Transverse colon (tissue), 4 donors: ENCODE measurements at regions of chr1 and their contacts with region 1.

Region 1: GRCh38 chr1:67149179-67149770 is 14.5 kb upstream of the C1orf141 start:
- DNase-seq: peak; percentile 78
- H3K4me3 ChIP-seq: no peak overlapping the region
- H3K27ac ChIP-seq: no peak overlapping the region
- H3K4me1 ChIP-seq: peaks cover 0 to 9% (median 2%) of the 10 kb centered on the region in 4 donors
- H3K27me3 ChIP-seq: no peaks in the 10 kb centered on the region
- CTCF ChIP-seq: peak; percentile 75 to 95 (median 78)
- EP300 ChIP-seq: no peak
- POLR2A ChIP-seq: no peak

Region 2: GRCh38 chr1:66764994-66765578 is 384.2 kb before region 1 on chr1:
- in situ Hi-C with region 1: loop called (anchors 10 to 25 kb)
- intact Hi-C with region 1: loop called (anchors 5 kb)
- DNase-seq: peak; percentile 30
- H3K4me3 ChIP-seq: no peak overlapping the region
- H3K27ac ChIP-seq: no peak overlapping the region
- H3K4me1 ChIP-seq: no peaks in the 10 kb centered on the region
- H3K27me3 ChIP-seq: no peaks in the 10 kb centered on the region
- CTCF ChIP-seq: peak; percentile 64 to 77 (median 71)
- EP300 ChIP-seq: no peak
- POLR2A ChIP-seq: no peak

Region 3: DNA sequence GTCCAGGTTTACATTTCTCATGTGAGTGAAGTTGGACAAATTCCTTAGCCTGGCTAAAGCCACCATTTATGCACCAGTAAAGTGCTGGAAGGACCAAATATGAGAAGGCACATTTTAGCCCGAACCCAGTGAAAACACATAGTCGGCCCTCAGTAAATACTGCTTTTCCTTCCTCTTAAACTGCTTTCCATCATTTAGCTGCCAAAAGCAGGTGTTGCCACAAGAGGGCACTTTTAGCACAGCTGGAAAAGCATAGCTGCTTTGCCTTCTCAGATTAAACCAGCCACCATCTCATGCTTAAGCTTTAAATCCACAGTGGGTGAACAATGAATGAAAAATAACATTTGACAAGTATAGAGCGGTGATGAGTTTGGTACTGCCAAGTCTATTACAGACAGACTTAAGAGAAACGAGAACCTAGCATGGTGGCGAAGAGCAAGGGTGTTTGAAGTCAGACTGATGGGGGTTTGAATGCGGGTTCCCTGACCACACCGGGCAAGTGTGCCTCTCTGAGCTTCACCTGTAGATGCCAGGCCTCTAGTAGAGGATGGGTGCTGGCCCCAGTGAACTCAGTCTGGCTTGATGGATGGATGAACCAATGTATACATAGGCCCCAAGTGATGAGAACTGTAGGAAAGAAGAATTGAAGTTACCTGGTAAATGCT is 153.1 kb before region 1 on chr1:
- in situ Hi-C with region 1: loop called (anchors 5 to 25 kb)
- intact Hi-C with region 1: loop called (anchors 5 kb)
- DNase-seq: peak; percentile 58
- H3K4me3 ChIP-seq: no peak overlapping the region
- H3K27ac ChIP-seq: no peak overlapping the region
- H3K4me1 ChIP-seq: no peaks in the 10 kb centered on the region
- H3K27me3 ChIP-seq: no peaks in the 10 kb centered on the region
- CTCF ChIP-seq: peak; percentile 63 to 83 (median 69)
- EP300 ChIP-seq: no peak
- POLR2A ChIP-seq: no peak

Region 4: DNA sequence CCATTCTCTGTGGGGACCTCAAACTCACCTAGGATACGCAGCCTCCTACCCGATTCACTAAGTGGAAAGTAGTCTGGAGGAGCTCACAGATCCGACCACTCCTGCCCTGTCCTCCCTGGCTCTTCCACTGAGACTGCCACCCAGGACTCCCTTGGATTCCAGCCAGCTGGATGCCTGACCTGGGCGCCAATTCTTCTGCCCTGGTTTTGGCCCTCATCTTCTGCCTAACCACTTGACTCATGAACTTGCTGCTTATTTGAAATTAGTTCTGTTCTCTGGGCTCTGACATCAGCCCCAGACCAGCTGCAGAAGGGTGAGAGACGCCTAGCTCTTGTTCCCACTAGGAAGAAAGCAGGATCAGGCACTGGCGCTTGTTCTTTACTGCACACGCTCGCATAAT is 144.2 kb before region 1 on chr1:
- in situ Hi-C with region 1: loop called in 2 of 4 experiments (anchors 10 to 25 kb)
- intact Hi-C with region 1: no loop called
- DNase-seq: no peak
- H3K4me3 ChIP-seq: no peak overlapping the region
- H3K27ac ChIP-seq: no peak overlapping the region
- H3K4me1 ChIP-seq: peaks cover 0 to 17% (median 2%) of the 10 kb centered on the region in 4 donors
- H3K27me3 ChIP-seq: no peaks in the 10 kb centered on the region
- CTCF ChIP-seq: no peak
- EP300 ChIP-seq: no peak
- POLR2A ChIP-seq: no peak

Region 5: DNA sequence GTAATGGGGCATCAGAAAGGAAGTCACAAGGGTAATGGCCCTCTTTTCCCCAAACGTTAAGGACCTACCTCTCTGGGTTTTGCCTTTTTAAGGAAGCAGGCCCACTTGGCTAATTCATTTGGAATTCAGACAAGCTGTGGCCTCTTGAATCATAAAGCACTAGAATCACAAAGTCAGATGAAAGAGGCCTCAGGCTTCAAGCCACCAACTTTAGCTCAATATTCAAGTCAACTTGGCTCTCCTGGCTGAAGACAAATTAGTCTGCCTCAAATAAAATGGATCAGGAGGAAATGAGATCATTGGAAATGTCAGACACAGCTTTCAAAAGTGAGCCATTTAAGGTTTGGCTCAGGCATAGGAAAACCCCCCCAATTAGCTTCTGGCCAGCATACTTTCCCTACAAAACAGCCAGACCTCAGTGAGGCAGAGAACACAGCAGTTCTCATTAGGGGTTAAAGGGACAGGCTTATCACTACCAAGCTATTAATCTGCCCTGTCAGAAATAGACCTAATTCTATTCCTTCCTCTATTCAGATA is 129.6 kb before region 1 on chr1:
- in situ Hi-C with region 1: loop called in 1 of 4 experiments (anchors 25 kb)
- intact Hi-C with region 1: no loop called
- DNase-seq: no peak
- H3K4me3 ChIP-seq: no peak overlapping the region
- H3K27ac ChIP-seq: peak overlapping the region; percentile 22 to 66 (median 46)
- H3K4me1 ChIP-seq: peaks cover 0 to 20% (median 7%) of the 10 kb centered on the region in 4 donors
- H3K27me3 ChIP-seq: no peaks in the 10 kb centered on the region
- CTCF ChIP-seq: no peak
- EP300 ChIP-seq: no peak
- POLR2A ChIP-seq: no peak